ENCODE measurements at regions of chr17 and their contacts with region 1.

Region 1: DNA sequence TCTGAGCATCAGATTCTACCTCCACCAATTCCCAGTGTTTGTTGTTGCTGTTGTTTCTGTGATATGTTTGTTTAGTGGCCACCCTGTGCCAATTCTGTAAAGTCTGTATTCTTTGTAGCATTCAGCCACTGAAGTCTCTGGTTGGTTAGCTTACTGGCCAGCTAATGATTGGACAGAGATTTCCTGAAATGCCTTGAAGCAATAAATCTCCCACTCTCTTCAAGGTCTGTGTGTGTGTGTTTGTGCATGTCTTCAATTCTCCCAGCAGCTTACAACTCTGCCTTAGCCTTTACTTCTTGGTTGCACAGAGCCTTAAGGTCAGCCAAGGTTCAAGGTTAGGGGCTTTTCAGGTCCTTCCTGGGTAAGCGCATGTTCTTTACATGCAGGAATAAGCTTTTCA is 38.2 kb downstream of the PRPSAP2 start:
- DNase-seq: no peak
- ATAC-seq: no peak
- H3K4me3 ChIP-seq: no peak overlapping the region
- H3K4me3 Mint-ChIP-seq: no peak overlapping the region
- H3K27ac ChIP-seq: no peak overlapping the region
- H3K27ac Mint-ChIP-seq: no peak overlapping the region
- H3K4me1 ChIP-seq: peaks cover 9% of the 10 kb centered on the region
- H3K4me1 Mint-ChIP-seq: peaks cover 42% of the 10 kb centered on the region
- H3K27me3 ChIP-seq: no peaks in the 10 kb centered on the region
- H3K27me3 Mint-ChIP-seq: no peaks in the 10 kb centered on the region
- CTCF ChIP-seq: no peak

Region 2: GRCh38 chr17:18772471-18772870 is 123.7 kb before region 1 on chr17:
- CTCF ChIA-PET with region 1: no interaction called
- POLR2A ChIA-PET with region 1: no interaction called
- intact Hi-C with region 1: no loop called
- DNase-seq: no peak
- ATAC-seq: no peak
- H3K4me3 ChIP-seq: no peak overlapping the region
- H3K4me3 Mint-ChIP-seq: no peak overlapping the region
- H3K27ac ChIP-seq: no peak overlapping the region
- H3K27ac Mint-ChIP-seq: no peak overlapping the region
- H3K4me1 ChIP-seq: no peaks in the 10 kb centered on the region
- H3K4me1 Mint-ChIP-seq: peaks cover 10% of the 10 kb centered on the region
- H3K27me3 ChIP-seq: no peaks in the 10 kb centered on the region
- H3K27me3 Mint-ChIP-seq: peaks cover 3% of the 10 kb centered on the region
- CTCF ChIP-seq: no peak

Region 3: GRCh38 chr17:18855831-18856569 is 40.1 kb before region 1 on chr17:
- CTCF ChIA-PET with region 1: interaction called, 4 read pairs
- POLR2A ChIA-PET with region 1: no interaction called
- intact Hi-C with region 1: loop called in 1 of 2 experiments (anchors 1 kb)
- DNase-seq: peak; percentile 72 to 95 (median 88)
- ATAC-seq: peak; percentile 84
- H3K4me3 ChIP-seq: peak overlapping the region; percentile 66 to 72
- H3K4me3 Mint-ChIP-seq: peak overlapping the region; percentile 91
- H3K27ac ChIP-seq: peak overlapping the region; percentile 32 to 62
- H3K27ac Mint-ChIP-seq: peak overlapping the region; percentile 92
- H3K4me1 ChIP-seq: peaks cover 37% of the 10 kb centered on the region
- H3K4me1 Mint-ChIP-seq: peaks cover 45% of the 10 kb centered on the region
- H3K27me3 ChIP-seq: no peaks in the 10 kb centered on the region
- H3K27me3 Mint-ChIP-seq: no peaks in the 10 kb centered on the region
- CTCF ChIP-seq: no peak

Region 4: DNA sequence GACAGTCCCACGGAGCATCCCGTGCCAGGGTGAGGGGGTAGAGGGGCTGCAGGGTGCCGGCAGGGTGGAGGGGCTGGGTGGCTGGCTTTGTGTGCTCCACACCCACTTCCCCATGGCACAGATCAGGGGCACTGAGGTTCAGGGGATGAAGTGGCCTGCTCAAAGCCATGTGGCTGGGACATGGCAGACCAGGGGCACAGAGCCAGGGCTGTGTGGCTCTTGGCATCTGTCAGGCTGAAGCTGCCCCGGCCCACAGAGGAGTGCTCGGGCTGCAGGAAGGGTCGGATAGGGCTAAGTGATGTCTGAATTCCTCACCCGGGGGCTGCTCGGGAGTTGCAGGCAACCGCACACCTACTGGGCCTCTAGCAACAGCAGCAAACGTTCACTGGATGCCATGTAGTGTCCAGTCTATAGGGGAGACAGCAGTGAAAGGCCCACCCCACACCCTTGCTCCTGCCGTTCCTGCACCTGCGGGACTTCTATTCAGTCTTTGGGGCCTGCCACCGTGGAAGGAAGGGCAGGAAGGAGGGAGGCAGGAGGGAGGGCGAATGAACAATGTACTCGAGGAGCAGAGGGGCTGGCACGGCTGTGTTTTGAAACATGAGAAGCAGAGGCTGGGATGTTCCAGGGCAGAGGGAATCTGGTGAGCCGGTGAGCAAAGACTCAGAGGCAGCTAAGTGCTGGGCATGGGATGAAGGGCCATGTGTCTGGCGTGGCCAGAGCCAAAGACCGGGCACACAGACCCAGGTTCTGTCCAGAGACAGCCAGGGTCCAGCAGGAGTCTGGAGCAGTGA is 70.9 kb after region 1 on chr17:
- CTCF ChIA-PET with region 1: no interaction called
- POLR2A ChIA-PET with region 1: no interaction called
- intact Hi-C with region 1: no loop called
- DNase-seq: no peak
- ATAC-seq: no peak
- H3K4me3 ChIP-seq: no peak overlapping the region
- H3K4me3 Mint-ChIP-seq: no peak overlapping the region
- H3K27ac ChIP-seq: no peak overlapping the region
- H3K27ac Mint-ChIP-seq: peak overlapping the region; percentile 18
- H3K4me1 ChIP-seq: no peaks in the 10 kb centered on the region
- H3K4me1 Mint-ChIP-seq: peaks cover 5% of the 10 kb centered on the region
- H3K27me3 ChIP-seq: no peaks in the 10 kb centered on the region
- H3K27me3 Mint-ChIP-seq: no peaks in the 10 kb centered on the region
- CTCF ChIP-seq: no peak

Region 5: GRCh38 chr17:19024101-19025078 is 128.2 kb after region 1 on chr17:
- CTCF ChIA-PET with region 1: no interaction called
- POLR2A ChIA-PET with region 1: no interaction called
- intact Hi-C with region 1: no loop called
- DNase-seq: peak in 2 of 9 experiments; percentile 23 to 36
- ATAC-seq: peak; percentile 59
- H3K4me3 ChIP-seq: no peak overlapping the region
- H3K4me3 Mint-ChIP-seq: peak overlapping the region; percentile 39
- H3K27ac ChIP-seq: peak overlapping the region in 1 of 2 experiments; percentile 8
- H3K27ac Mint-ChIP-seq: peak overlapping the region; percentile 84
- H3K4me1 ChIP-seq: peaks cover 14% of the 10 kb centered on the region
- H3K4me1 Mint-ChIP-seq: peaks cover 16% of the 10 kb centered on the region
- H3K27me3 ChIP-seq: no peaks in the 10 kb centered on the region
- H3K27me3 Mint-ChIP-seq: no peaks in the 10 kb centered on the region
- CTCF ChIP-seq: no peak